ENCODE measurements at regions of chr15 and their contacts with region 1.

Region 1: DNA sequence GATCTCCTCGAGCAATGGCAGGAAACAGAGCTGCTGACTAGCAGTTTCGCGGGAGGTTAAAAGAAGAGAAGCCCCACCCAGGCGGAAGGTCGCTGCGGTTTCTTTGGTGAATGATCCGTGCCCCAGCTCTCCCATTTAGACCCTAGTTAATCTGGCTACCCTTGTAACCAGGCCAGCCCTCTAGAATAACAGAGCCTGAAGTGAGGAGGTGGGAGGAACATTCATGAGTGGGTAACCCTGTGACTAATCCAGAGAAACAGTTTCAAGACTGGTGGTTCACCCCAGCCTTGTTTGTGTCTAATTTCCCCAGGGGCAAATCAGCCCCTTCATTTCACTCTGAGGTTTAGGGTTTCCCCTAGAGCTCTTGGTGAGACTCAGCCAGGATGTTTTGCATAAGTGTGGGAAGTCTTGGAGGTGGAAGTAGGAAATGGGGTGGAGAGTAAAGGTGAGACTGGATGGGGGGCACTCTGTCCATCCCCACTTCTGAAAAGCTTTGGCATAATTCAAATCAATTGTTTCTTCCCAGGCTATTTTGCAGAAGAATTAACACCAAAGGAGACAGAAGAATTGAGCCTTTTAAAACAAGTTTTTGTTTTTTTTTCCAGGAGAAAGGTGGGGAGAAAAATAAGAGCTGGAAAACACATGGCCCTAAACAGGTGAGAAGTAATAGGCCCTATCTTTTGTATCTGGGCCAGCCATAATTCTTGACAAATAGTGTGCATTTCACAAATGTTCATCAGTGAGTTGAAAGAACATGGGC is 303.1 kb downstream of the RPLP1 start:
- DNase-seq: peak; percentile 94
- H3K4me3 Mint-ChIP-seq: peak overlapping the region; percentile 69
- H3K27ac Mint-ChIP-seq: peak overlapping the region; percentile 87
- H3K4me1 Mint-ChIP-seq: peaks cover 67% of the 10 kb centered on the region
- H3K27me3 Mint-ChIP-seq: peaks cover 2% of the 10 kb centered on the region

Region 2: GRCh38 chr15:69468241-69469121 is 287.2 kb before region 1 on chr15:
- intact Hi-C with region 1: loop called (anchors 5 kb)
- DNase-seq: peak; percentile 93
- H3K4me3 Mint-ChIP-seq: peak overlapping the region; percentile 51
- H3K27ac Mint-ChIP-seq: peak overlapping the region; percentile 79
- H3K4me1 Mint-ChIP-seq: peaks cover 24% of the 10 kb centered on the region
- H3K27me3 Mint-ChIP-seq: peaks cover 17% of the 10 kb centered on the region

Region 3: GRCh38 chr15:69679623-69680228 is 76.0 kb before region 1 on chr15:
- intact Hi-C with region 1: loop called (anchors 1 kb)
- DNase-seq: peak; percentile 73
- H3K4me3 Mint-ChIP-seq: peak overlapping the region; percentile 4
- H3K27ac Mint-ChIP-seq: peak overlapping the region; percentile 70
- H3K4me1 Mint-ChIP-seq: peaks cover 22% of the 10 kb centered on the region
- H3K27me3 Mint-ChIP-seq: peaks cover 13% of the 10 kb centered on the region

Region 4: GRCh38 chr15:69719527-69720240 is 36.0 kb before region 1 on chr15:
- intact Hi-C with region 1: loop called (anchors 1 kb)
- DNase-seq: peak; percentile 84
- H3K4me3 Mint-ChIP-seq: no peak overlapping the region
- H3K27ac Mint-ChIP-seq: no peak overlapping the region
- H3K4me1 Mint-ChIP-seq: peaks cover 71% of the 10 kb centered on the region
- H3K27me3 Mint-ChIP-seq: peaks cover 15% of the 10 kb centered on the region

Region 5: GRCh38 chr15:69823218-69823907 is 67.6 kb after region 1 on chr15:
- intact Hi-C with region 1: no loop called
- DNase-seq: no peak
- H3K4me3 Mint-ChIP-seq: no peak overlapping the region
- H3K27ac Mint-ChIP-seq: no peak overlapping the region
- H3K4me1 Mint-ChIP-seq: no peaks in the 10 kb centered on the region
- H3K27me3 Mint-ChIP-seq: peaks cover 30% of the 10 kb centered on the region

Region 6: DNA sequence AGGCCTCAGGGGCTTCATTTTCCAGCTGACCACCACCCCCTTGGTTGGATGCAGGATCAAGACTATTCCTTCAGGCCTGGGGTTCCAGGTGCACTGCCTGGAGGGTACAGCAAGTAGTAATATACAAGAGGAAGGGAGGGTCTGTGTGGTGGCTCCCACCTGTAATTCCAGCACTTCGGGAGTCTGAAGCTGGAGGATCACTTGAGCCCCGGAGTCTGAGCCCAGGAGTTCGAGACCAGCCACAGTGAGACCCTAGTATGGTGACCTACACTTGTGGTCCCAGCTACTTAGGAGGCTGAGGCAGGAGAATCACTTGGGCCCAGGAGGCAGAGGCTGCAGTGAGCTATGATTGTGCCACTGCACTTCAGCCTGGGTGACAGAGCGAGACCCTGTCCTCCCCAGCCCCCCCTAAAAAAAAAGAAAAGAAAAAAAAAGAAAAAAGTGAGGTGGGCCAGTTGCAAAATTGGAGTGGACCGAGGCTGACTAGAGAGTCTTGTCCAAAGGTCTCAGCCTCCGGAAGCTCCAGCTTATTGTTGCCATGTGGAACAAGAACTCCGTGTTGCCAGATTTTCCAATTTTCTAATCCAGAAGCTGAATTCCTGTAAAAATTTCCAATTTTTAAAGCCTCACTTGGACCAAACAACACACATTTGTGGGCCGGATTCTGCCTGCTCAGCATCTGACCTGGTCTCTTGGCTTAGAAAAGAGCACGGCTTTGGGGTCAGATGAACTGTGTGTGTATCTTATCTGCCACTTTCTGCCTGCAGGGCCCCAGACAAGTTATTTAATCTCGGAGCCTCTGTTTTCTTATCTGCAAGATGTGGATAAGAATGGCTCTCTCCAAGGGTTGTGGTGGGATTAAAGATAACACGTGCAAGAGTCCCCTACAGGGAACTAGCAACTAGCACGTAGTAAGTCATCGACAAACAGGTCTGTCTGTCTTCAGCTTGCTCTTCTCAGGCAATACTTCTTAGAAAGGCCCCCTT is 415.5 kb after region 1 on chr15:
- intact Hi-C with region 1: no loop called
- DNase-seq: no peak
- H3K4me3 Mint-ChIP-seq: no peak overlapping the region
- H3K27ac Mint-ChIP-seq: no peak overlapping the region
- H3K4me1 Mint-ChIP-seq: no peaks in the 10 kb centered on the region
- H3K27me3 Mint-ChIP-seq: peaks cover 23% of the 10 kb centered on the region

Region 7: GRCh38 chr15:70504299-70504951 is 748.7 kb after region 1 on chr15:
- intact Hi-C with region 1: loop called (anchors 5 kb)
- DNase-seq: peak; percentile 80
- H3K4me3 Mint-ChIP-seq: peak overlapping the region; percentile 71
- H3K27ac Mint-ChIP-seq: peak overlapping the region; percentile 78
- H3K4me1 Mint-ChIP-seq: peaks cover 73% of the 10 kb centered on the region
- H3K27me3 Mint-ChIP-seq: peaks cover 3% of the 10 kb centered on the region

Measured in activated CD4-positive, alpha-beta T cell treated with anti-CD3 and anti-CD28 coated beads, Interleukin-2, amount 10 ng/mL, durations not matched to agents 24 days and 14 days (primary cell).